CD8-positive, alpha-beta T cell (primary cell): ENCODE measurements at regions of chr17 and their contacts with region 1.

Region 1: DNA sequence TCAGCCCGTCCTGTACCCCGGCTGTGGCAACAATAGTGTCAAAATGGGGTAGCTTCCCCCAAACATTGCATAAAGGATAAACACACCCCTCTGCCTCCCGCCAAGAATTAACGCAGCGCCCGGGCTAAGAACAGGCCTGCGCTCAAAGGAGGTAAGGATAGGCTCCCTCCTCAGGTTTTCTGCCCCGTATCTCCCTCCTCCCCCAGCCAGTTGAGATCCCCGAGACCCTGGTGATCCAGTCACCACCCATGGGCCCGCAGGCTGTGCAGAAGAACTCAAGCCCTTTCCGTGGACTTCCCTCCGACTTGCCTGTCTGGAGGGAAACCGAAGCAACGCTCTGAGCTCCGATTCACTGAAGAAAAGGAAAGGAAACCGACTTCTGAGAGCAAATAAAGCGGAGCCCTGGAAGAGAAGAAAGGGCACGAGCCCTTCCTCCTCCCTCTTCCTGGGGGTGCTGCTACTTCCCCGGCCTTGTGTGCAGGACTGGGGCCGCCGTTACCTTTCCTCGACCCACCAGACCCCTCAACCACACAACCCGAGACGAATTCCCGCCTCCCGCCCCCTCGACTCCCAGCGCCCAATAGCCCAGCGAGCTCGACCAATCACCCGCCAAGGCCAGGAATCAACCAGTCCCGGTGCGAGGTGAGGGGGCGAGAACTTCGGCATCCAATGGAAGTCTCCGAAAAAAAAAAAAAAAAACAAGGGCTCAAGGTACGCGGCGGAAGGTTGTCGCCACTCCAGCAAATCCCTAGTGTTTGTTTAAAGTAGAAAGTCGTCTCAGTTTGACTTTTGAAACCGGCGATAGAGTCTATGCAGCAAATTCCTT is at the start of gene BRIP1:
- DNase-seq: peak; percentile 71 to 94 (median 86)
- ATAC-seq: peak; percentile 97
- H3K4me3 ChIP-seq: peak within 1 kb of the TSS; percentile 62 to 95
- H3K4me3 Mint-ChIP-seq: peak within 1 kb of the TSS; percentile 97
- H3K27ac ChIP-seq: peak within 1 kb of the TSS; percentile 57 to 66
- H3K27ac Mint-ChIP-seq: peak within 1 kb of the TSS; percentile 89
- H3K4me1 ChIP-seq: peaks cover 6% of the 10 kb centered on the region
- H3K4me1 Mint-ChIP-seq: peaks cover 20% of the 10 kb centered on the region
- H3K27me3 ChIP-seq: no peaks in the 10 kb centered on the region
- H3K27me3 Mint-ChIP-seq: no peaks in the 10 kb centered on the region
- CTCF ChIP-seq: no peak
- total RNA-seq, gene BRIP1: 0.57 to 1.5 TPM

Region 2: GRCh38 chr17:60599620-60600489 is 1263.3 kb before region 1 on chr17 and contains the start of gene PPM1D:
- CTCF ChIA-PET with region 1: no interaction called
- POLR2A ChIA-PET with region 1: no interaction called
- intact Hi-C with region 1: loop called (anchors 5 kb)
- DNase-seq: peak; percentile 92 to 99 (median 98)
- ATAC-seq: peak; percentile 93
- H3K4me3 ChIP-seq: peak within 1 kb of the TSS; percentile 84 to 97
- H3K4me3 Mint-ChIP-seq: peak within 1 kb of the TSS; percentile 94
- H3K27ac ChIP-seq: peak within 1 kb of the TSS; percentile 76 to 96
- H3K27ac Mint-ChIP-seq: peak within 1 kb of the TSS; percentile 94
- H3K4me1 ChIP-seq: peaks cover 11% of the 10 kb centered on the region
- H3K4me1 Mint-ChIP-seq: peaks cover 38% of the 10 kb centered on the region
- H3K27me3 ChIP-seq: no peaks in the 10 kb centered on the region
- H3K27me3 Mint-ChIP-seq: no peaks in the 10 kb centered on the region
- CTCF ChIP-seq: no peak
- total RNA-seq, gene PPM1D: 21.0 to 21.1 TPM

Region 3: DNA sequence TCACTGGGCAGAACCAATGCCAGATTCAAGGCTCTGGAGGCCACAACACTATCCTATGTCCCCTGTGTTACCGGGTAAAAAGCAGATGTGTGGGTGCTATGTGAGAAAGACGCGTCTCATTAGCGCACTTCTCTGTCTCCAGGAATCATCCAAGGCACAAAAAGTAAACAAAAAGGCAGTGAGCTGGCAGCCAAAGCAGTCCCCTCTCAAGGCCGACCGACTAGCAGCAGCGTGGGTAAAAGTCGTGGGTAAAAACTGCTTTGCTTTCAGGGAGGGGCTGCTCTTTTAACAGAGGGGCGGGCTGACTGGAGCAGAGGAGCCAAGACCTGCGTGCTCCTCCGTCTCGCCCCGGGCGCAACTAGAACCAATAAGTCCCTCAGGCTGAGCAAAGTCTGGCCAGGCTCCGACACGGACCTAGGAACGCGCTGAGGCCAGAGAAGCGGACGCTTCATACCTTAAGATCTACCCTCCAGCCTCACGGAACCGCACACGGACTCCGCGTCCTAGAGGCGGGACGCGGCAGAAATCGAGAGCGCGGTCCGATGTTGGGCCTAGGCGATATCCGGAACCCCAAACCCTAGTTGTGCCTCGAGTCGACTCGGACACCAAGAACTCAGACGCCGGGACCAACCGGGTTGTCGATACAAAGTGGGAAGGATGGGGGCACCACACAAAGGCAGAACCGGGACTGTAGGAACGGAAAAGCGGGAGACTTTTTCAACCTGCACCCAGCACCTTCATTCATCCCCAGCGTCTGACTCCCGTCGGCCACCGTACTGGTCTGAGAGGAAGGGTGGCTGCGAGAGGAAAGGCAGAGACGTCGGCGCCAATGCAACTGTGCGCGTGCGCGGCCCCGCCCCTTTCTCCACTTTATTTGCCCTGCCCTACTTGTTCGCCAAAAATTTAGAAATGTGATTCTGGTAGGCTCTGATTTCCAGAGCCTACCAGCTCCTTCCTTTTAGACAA is 64.3 kb after region 1 on chr17 and contains the start of gene INTS2:
- CTCF ChIA-PET with region 1: no interaction called
- POLR2A ChIA-PET with region 1: interaction called, 4 read pairs
- intact Hi-C with region 1: loop called (anchors 2 kb)
- DNase-seq: peak; percentile 92 to 98 (median 96)
- ATAC-seq: peak; percentile 84
- H3K4me3 ChIP-seq: peak within 1 kb of the TSS; percentile 80 to 91
- H3K4me3 Mint-ChIP-seq: peak within 1 kb of the TSS; percentile 90
- H3K27ac ChIP-seq: peak within 1 kb of the TSS; percentile 71 to 92
- H3K27ac Mint-ChIP-seq: peak within 1 kb of the TSS; percentile 98
- H3K4me1 ChIP-seq: peaks cover 14% of the 10 kb centered on the region
- H3K4me1 Mint-ChIP-seq: peaks cover 22% of the 10 kb centered on the region
- H3K27me3 ChIP-seq: no peaks in the 10 kb centered on the region
- H3K27me3 Mint-ChIP-seq: peaks cover 2% of the 10 kb centered on the region
- CTCF ChIP-seq: no peak
- total RNA-seq, gene INTS2: 9.4 to 9.6 TPM